ENCODE measurements at regions of chr1 and their contacts with region 1.

Region 1: GRCh38 chr1:247131236-247131635 is 27.1 kb upstream of the ZNF669 start:
- DNase-seq: no peak
- H3K4me3 ChIP-seq: no peak overlapping the region
- H3K27ac ChIP-seq: no peak overlapping the region
- H3K4me1 ChIP-seq: peaks cover 0 to 6% (median 4%) of the 10 kb centered on the region in 6 donors
- H3K27me3 ChIP-seq: no peaks in the 10 kb centered on the region
- CTCF ChIP-seq: no peak
- POLR2A ChIP-seq: no peak

Region 2: GRCh38 chr1:247180581-247180980 is 49.3 kb after region 1 on chr1:
- intact Hi-C with region 1: loop called (anchors 10 kb)
- DNase-seq: no peak
- H3K4me3 ChIP-seq: no peak overlapping the region
- H3K27ac ChIP-seq: no peak overlapping the region
- H3K4me1 ChIP-seq: no peaks in the 10 kb centered on the region
- H3K27me3 ChIP-seq: no peaks in the 10 kb centered on the region
- CTCF ChIP-seq: no peak
- POLR2A ChIP-seq: no peak

Measured in spleen (tissue), 13 donors.